ENCODE measurements at regions of chr16 and their contacts with region 1.

Region 1: GRCh38 chr16:75379911-75380847 is 53.1 kb downstream of the CFDP1 start:
- DNase-seq: no peak
- H3K4me3 ChIP-seq: no peak overlapping the region
- H3K27ac ChIP-seq: peak overlapping the region in 1 of 2 donors; percentile 30
- H3K4me1 ChIP-seq: peaks cover 0 to 14% (median 5%) of the 10 kb centered on the region in 4 donors
- H3K27me3 ChIP-seq: no peaks in the 10 kb centered on the region
- CTCF ChIP-seq: no peak

Region 2: GRCh38 chr16:75224306-75225091 is 155.7 kb before region 1 on chr16:
- intact Hi-C with region 1: loop called (anchors 5 kb)
- DNase-seq: peak in 1 of 2 donors; percentile 66
- H3K4me3 ChIP-seq: no peak overlapping the region
- H3K27ac ChIP-seq: no peak overlapping the region
- H3K4me1 ChIP-seq: peaks cover 0 to 9% (median 0%) of the 10 kb centered on the region in 4 donors
- H3K27me3 ChIP-seq: no peaks in the 10 kb centered on the region
- CTCF ChIP-seq: no peak

Region 3: DNA sequence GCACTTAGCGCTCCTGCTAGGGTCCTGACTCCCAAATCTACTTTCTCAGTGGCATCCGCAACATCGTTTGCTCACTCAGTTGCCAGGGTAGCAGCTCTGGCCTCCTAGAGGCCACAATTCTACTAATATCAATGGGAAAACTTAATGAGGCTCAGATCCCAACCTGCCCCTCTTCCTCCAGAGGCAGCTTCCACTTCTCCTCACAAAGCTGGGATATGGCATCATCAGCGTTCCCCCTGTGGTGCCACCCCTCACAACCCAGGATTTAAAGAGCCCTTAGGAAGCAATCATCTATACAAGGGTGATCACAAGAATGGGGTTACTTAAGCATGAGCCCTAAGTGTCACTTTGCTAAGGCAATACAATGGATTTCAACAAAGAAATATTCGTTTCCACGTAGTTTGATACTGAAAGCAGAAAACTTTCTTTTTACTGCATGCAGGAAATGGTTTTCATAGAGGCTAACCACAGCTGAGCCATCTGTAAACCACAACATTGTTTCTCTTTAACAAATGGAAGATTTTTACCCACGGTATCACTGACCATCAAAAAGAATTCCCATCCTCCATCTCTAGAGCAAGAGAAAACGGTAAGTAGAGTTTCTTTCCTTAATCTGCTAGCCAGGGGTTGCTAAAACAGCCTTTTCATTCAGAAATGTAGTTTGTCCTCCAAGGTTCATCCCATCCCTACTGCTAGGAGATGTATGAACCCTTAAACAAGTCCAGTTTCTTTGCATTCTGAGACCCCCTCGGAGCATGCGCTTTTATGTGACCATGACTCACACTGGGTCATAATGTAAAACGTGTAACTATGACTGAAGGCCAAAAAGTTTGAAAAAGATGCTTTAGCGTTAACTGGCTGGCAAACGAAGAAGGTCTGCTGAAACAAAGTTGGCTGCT is 60.4 kb before region 1 on chr16:
- intact Hi-C with region 1: loop called (anchors 10 kb)
- DNase-seq: no peak
- H3K4me3 ChIP-seq: no peak overlapping the region
- H3K27ac ChIP-seq: no peak overlapping the region
- H3K4me1 ChIP-seq: peaks cover 0 to 16% (median 5%) of the 10 kb centered on the region in 4 donors
- H3K27me3 ChIP-seq: no peaks in the 10 kb centered on the region
- CTCF ChIP-seq: no peak